CD4-positive, alpha-beta memory T cell (primary cell): ENCODE measurements at regions of chr17 and their contacts with region 1.

Region 1: GRCh38 chr17:44210342-44211192 is 8.9 kb downstream of the UBTF start:
- DNase-seq: peak; percentile 86 to 93 (median 92)
- H3K4me3 ChIP-seq: no peak overlapping the region
- H3K4me3 Mint-ChIP-seq: peak overlapping the region in 6 of 8 donors; percentile 11 to 78 (median 54)
- H3K27ac ChIP-seq: peak overlapping the region; percentile 47
- H3K27ac Mint-ChIP-seq: peak overlapping the region; percentile 25 to 91 (median 76)
- H3K4me1 ChIP-seq: peaks cover 44% of the 10 kb centered on the region
- H3K4me1 Mint-ChIP-seq: peaks cover 25 to 64% (median 36%) of the 10 kb centered on the region in 4 donors
- H3K27me3 ChIP-seq: no peaks in the 10 kb centered on the region
- H3K27me3 Mint-ChIP-seq: no peaks in the 10 kb centered on the region

Region 2: GRCh38 chr17:44199553-44200477 is 10.8 kb before region 1 on chr17 and contains the start of gene ATXN7L3:
- CTCF ChIA-PET with region 1: interaction called, 39 read pairs
- POLR2A ChIA-PET with region 1: interaction called, 325 read pairs
- intact Hi-C with region 1: loop called (anchors 1 kb)
- DNase-seq: peak; percentile 96 to 99 (median 98)
- H3K4me3 ChIP-seq: peak within 1 kb of the TSS; percentile 82 to 88
- H3K4me3 Mint-ChIP-seq: peak within 1 kb of the TSS; percentile 90 to 94 (median 92)
- H3K27ac ChIP-seq: peak within 1 kb of the TSS; percentile 82
- H3K27ac Mint-ChIP-seq: peak within 1 kb of the TSS; percentile 89 to 98 (median 96)
- H3K4me1 ChIP-seq: peaks cover 43% of the 10 kb centered on the region
- H3K4me1 Mint-ChIP-seq: peaks cover 30 to 58% (median 40%) of the 10 kb centered on the region in 4 donors
- H3K27me3 ChIP-seq: no peaks in the 10 kb centered on the region
- H3K27me3 Mint-ChIP-seq: no peaks in the 10 kb centered on the region
- total RNA-seq, gene ATXN7L3: 123 to 128 TPM

Region 3: GRCh38 chr17:44314869-44315661 is 104.5 kb after region 1 on chr17:
- CTCF ChIA-PET with region 1: interaction called, 14 read pairs
- POLR2A ChIA-PET with region 1: interaction called, 209 read pairs
- intact Hi-C with region 1: no loop called
- DNase-seq: peak in 4 of 5 donors; percentile 26 to 37 (median 32)
- H3K4me3 ChIP-seq: peak overlapping the region in 1 of 2 donors; percentile 21
- H3K4me3 Mint-ChIP-seq: peak overlapping the region; percentile 56 to 87 (median 68)
- H3K27ac ChIP-seq: no peak overlapping the region
- H3K27ac Mint-ChIP-seq: peak overlapping the region in 1 of 7 donors; percentile 4
- H3K4me1 ChIP-seq: peaks cover 15% of the 10 kb centered on the region
- H3K4me1 Mint-ChIP-seq: peaks cover 11 to 19% (median 13%) of the 10 kb centered on the region in 4 donors
- H3K27me3 ChIP-seq: peaks cover 13% of the 10 kb centered on the region
- H3K27me3 Mint-ChIP-seq: peaks cover 22 to 33% of the 10 kb centered on the region in 2 donors

Region 4: DNA sequence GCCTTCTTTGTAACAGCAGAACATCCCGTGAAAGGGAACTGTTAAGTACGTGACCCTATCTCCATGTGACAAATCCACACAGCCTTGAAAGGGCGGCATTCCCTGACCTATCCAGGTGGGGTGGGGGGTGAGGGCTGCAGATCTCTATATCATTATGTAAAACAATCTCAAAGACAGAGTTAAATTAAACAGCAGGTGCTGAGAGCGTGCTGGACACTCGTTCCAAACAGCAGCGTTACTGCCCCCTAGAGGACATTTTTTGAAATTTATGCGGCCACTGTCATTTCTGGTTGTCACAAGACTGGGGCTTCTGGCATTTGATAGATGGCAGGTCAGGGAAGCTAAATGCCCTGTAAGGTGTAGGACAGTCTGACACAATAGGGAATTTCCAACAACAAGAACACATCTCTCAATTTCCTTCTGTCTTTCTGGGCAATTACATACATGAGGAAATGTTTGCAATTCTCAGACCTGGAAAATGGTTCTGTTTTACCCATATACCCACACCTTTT is 120.7 kb after region 1 on chr17:
- CTCF ChIA-PET with region 1: interaction called, 107 read pairs
- POLR2A ChIA-PET with region 1: interaction called, 209 read pairs
- intact Hi-C with region 1: loop called (anchors 1 kb)
- DNase-seq: peak; percentile 69 to 79 (median 74)
- H3K4me3 ChIP-seq: no peak overlapping the region
- H3K4me3 Mint-ChIP-seq: peak overlapping the region in 1 of 8 donors; percentile 39
- H3K27ac ChIP-seq: no peak overlapping the region
- H3K27ac Mint-ChIP-seq: peak overlapping the region in 3 of 7 donors; percentile 25 to 77 (median 70)
- H3K4me1 ChIP-seq: peaks cover 4% of the 10 kb centered on the region
- H3K4me1 Mint-ChIP-seq: peaks cover 10 to 23% (median 14%) of the 10 kb centered on the region in 4 donors
- H3K27me3 ChIP-seq: no peaks in the 10 kb centered on the region
- H3K27me3 Mint-ChIP-seq: no peaks in the 10 kb centered on the region

Region 5: DNA sequence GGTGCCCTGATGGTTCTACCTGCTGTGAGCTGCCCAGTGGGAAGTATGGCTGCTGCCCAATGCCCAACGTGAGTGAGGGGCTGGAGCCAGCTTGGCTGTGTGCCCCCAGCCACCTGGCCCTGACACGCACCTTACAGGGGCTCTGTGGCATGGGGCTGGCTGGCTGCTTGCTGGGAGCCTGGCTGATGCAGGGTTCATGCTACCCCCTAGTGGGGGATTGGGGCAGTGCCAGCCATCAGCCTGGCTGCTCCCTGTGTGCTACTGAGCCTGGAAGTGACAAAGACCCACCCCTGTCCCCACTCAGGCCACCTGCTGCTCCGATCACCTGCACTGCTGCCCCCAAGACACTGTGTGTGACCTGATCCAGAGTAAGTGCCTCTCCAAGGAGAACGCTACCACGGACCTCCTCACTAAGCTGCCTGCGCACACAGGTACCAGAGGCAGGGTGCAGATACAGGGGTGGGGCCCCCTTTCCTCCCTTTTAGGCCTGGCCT is 140.2 kb after region 1 on chr17:
- CTCF ChIA-PET with region 1: interaction called, 41 read pairs
- POLR2A ChIA-PET with region 1: interaction called, 12 read pairs
- intact Hi-C with region 1: no loop called
- DNase-seq: peak in 4 of 5 donors; percentile 63 to 70 (median 64)
- H3K4me3 ChIP-seq: no peak overlapping the region
- H3K4me3 Mint-ChIP-seq: peak overlapping the region in 1 of 8 donors; percentile 46
- H3K27ac ChIP-seq: no peak overlapping the region
- H3K27ac Mint-ChIP-seq: peak overlapping the region in 1 of 7 donors; percentile 51
- H3K4me1 ChIP-seq: peaks cover 7% of the 10 kb centered on the region
- H3K4me1 Mint-ChIP-seq: peaks cover 9 to 19% (median 13%) of the 10 kb centered on the region in 4 donors
- H3K27me3 ChIP-seq: no peaks in the 10 kb centered on the region
- H3K27me3 Mint-ChIP-seq: no peaks in the 10 kb centered on the region

Region 6: DNA sequence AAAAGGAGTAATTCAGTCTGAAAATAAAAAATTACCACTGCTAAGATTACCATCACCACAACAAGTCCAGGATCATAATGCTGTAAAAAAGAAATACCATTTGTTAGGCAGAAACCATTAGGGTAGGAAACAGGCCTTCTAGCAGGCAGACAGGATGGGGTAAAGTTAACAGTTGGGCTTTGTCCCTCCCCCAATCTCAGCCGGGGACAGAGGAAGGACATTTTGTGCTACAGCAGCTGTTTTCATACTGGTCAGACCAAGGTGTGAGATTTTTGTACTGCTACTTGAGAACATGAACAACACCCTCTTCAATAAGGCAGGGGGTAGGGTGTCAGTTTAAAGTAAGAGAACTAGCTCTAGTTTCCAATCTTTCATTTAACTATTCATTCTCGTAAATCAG is 228.1 kb after region 1 on chr17:
- CTCF ChIA-PET with region 1: no interaction called
- POLR2A ChIA-PET with region 1: no interaction called
- intact Hi-C with region 1: no loop called
- DNase-seq: no peak
- H3K4me3 ChIP-seq: no peak overlapping the region
- H3K4me3 Mint-ChIP-seq: peak overlapping the region in 1 of 8 donors; percentile 18
- H3K27ac ChIP-seq: no peak overlapping the region
- H3K27ac Mint-ChIP-seq: peak overlapping the region in 6 of 7 donors; percentile 0 to 79 (median 22)
- H3K4me1 ChIP-seq: peaks cover 12% of the 10 kb centered on the region
- H3K4me1 Mint-ChIP-seq: peaks cover 14 to 26% (median 21%) of the 10 kb centered on the region in 4 donors
- H3K27me3 ChIP-seq: no peaks in the 10 kb centered on the region
- H3K27me3 Mint-ChIP-seq: no peaks in the 10 kb centered on the region